ENCODE measurements at regions of chr5 and their contacts with region 1.

Region 1: GRCh38 chr5:149828161-149828884 is 98.2 kb downstream of the PPARGC1B start:
- DNase-seq: peak; percentile 87
- ATAC-seq: peak; percentile 80
- H3K4me3 Mint-ChIP-seq: no peak overlapping the region
- H3K27ac Mint-ChIP-seq: no peak overlapping the region
- H3K4me1 Mint-ChIP-seq: peaks cover 8% of the 10 kb centered on the region
- H3K27me3 Mint-ChIP-seq: no peaks in the 10 kb centered on the region

Region 2: GRCh38 chr5:149636851-149637246 is 191.5 kb before region 1 on chr5:
- CTCF ChIA-PET with region 1: interaction called, 115 read pairs
- DNase-seq: peak; percentile 73
- ATAC-seq: peak; percentile 66
- H3K4me3 Mint-ChIP-seq: no peak overlapping the region
- H3K27ac Mint-ChIP-seq: no peak overlapping the region
- H3K4me1 Mint-ChIP-seq: peaks cover 13% of the 10 kb centered on the region
- H3K27me3 Mint-ChIP-seq: no peaks in the 10 kb centered on the region

Region 3: DNA sequence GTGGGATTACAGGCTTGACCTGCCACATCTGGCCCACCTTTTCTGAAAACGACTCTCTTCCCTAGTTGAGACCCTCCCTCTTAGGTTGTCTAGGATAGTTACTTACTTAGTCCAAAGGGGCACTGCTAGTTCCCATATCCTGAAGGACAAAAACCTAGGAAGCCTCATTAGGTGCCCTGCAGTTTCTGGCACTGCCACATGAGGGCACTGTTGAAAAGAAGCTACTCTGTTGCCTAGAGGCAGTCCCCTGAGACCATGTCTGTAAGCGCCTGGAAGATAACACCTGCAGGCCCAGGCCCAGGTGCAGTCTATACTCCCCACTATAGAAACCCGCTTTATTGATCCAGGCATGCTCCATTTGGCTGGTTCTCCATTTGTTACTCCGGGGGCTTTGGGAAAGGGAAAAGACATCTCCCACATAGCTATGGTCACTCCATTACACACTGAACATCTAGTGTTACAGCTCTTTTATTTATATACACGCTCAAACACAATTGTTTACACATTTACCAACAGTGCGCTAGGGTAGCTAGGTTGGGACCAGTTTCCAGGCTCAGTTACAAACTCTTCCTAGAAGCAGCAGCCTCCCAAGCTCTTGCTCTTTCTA is 171.6 kb before region 1 on chr5:
- CTCF ChIA-PET with region 1: interaction called, 113 read pairs
- DNase-seq: peak; percentile 50
- ATAC-seq: no peak
- H3K4me3 Mint-ChIP-seq: no peak overlapping the region
- H3K27ac Mint-ChIP-seq: peak overlapping the region; percentile 26
- H3K4me1 Mint-ChIP-seq: no peaks in the 10 kb centered on the region
- H3K27me3 Mint-ChIP-seq: peaks cover 11% of the 10 kb centered on the region

Region 4: DNA sequence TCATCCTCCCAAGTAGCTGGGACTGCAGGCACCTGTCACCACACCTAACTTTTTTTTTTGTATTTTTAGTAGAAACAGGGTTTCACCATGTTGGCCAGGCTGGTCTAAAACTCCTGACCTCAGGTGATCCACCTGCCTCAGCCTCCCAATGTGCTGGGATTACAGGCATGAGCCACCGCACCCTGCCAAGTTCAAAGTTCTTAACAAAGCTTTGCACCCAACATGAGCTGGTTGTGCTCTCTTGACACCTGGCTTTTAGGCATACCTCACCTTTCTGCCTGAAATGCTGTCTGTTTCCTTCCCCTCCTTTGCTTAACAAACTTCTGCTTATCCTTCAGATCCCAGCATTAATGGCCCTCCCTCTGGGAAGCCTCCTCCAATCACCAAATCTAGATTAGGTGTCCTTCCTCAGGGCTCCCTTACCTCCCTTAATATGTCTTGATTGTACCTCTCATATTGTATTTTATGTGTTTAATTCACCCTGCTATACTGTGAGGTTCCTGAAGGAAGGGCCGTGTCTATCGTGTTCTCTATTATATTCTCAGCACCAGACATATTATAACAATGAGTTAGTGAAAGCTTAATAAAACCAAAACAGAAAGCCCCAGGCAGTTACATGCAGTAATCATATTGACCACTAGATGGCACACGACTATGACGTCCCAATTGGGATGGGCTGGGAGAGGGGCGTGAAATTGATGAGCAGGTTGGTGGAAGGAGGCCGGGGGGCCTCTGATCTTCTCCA is 161.1 kb before region 1 on chr5:
- CTCF ChIA-PET with region 1: interaction called, 113 read pairs
- DNase-seq: peak; percentile 41
- ATAC-seq: peak; percentile 36
- H3K4me3 Mint-ChIP-seq: no peak overlapping the region
- H3K27ac Mint-ChIP-seq: no peak overlapping the region
- H3K4me1 Mint-ChIP-seq: peaks cover 2% of the 10 kb centered on the region
- H3K27me3 Mint-ChIP-seq: peaks cover 7% of the 10 kb centered on the region

Region 5: GRCh38 chr5:149759986-149760853 is 68.1 kb before region 1 on chr5:
- CTCF ChIA-PET with region 1: no interaction called
- DNase-seq: no peak
- ATAC-seq: no peak
- H3K4me3 Mint-ChIP-seq: no peak overlapping the region
- H3K27ac Mint-ChIP-seq: no peak overlapping the region
- H3K4me1 Mint-ChIP-seq: peaks cover 5% of the 10 kb centered on the region
- H3K27me3 Mint-ChIP-seq: no peaks in the 10 kb centered on the region

Region 6: GRCh38 chr5:149960272-149961185 is 132.2 kb after region 1 on chr5 and contains the start of gene SLC26A2:
- CTCF ChIA-PET with region 1: interaction called, 98 read pairs
- DNase-seq: peak; percentile 98
- ATAC-seq: peak; percentile 99
- H3K4me3 Mint-ChIP-seq: peak within 1 kb of the TSS; percentile 85
- H3K27ac Mint-ChIP-seq: peak within 1 kb of the TSS; percentile 94
- H3K4me1 Mint-ChIP-seq: peaks cover 31% of the 10 kb centered on the region
- H3K27me3 Mint-ChIP-seq: no peaks in the 10 kb centered on the region
- total RNA-seq, gene SLC26A2: 6.2 to 8.4 TPM

Region 7: DNA sequence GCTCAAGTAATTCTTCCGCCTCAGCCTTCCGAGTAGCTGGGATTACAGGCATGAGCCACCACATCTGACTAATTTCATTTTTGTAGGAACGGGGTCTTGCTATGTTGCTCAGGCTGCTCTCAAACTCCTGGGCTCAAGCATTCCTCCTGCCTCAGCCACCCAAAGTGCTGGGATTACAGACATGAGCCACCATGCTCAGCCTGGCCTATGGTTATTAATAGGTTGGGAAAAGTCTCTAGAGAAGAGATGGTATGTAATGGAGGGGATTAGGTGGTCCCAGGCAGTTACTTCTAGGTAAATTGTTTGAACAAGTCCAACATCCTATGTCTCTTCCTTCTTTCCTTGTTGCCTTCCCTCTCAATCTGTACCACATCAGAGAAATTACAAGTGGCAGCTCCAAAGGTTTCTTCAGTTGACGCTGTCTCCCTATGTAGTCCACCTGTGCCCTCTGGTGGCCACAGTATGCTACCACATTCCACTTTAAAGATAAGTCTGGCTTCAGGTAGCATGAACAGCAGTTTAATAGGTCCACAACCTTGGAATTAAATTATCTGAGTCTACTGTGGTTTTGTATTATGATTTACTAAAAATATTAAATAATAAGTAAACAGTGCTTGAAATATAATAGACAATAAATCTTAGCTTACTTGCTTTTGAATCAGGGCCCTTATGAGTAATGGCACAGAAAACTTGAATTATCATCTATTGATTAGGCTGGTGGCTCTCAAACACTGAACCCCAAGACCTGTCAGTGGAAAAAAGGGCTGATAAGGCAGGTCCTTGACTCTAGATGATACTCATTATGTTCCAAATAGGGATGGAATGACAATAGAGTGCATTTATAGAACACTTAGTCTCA is 162.4 kb after region 1 on chr5:
- CTCF ChIA-PET with region 1: interaction called, 123 read pairs
- DNase-seq: peak; percentile 80
- ATAC-seq: peak; percentile 86
- H3K4me3 Mint-ChIP-seq: no peak overlapping the region
- H3K27ac Mint-ChIP-seq: no peak overlapping the region
- H3K4me1 Mint-ChIP-seq: peaks cover 3% of the 10 kb centered on the region
- H3K27me3 Mint-ChIP-seq: no peaks in the 10 kb centered on the region

Region 8: DNA sequence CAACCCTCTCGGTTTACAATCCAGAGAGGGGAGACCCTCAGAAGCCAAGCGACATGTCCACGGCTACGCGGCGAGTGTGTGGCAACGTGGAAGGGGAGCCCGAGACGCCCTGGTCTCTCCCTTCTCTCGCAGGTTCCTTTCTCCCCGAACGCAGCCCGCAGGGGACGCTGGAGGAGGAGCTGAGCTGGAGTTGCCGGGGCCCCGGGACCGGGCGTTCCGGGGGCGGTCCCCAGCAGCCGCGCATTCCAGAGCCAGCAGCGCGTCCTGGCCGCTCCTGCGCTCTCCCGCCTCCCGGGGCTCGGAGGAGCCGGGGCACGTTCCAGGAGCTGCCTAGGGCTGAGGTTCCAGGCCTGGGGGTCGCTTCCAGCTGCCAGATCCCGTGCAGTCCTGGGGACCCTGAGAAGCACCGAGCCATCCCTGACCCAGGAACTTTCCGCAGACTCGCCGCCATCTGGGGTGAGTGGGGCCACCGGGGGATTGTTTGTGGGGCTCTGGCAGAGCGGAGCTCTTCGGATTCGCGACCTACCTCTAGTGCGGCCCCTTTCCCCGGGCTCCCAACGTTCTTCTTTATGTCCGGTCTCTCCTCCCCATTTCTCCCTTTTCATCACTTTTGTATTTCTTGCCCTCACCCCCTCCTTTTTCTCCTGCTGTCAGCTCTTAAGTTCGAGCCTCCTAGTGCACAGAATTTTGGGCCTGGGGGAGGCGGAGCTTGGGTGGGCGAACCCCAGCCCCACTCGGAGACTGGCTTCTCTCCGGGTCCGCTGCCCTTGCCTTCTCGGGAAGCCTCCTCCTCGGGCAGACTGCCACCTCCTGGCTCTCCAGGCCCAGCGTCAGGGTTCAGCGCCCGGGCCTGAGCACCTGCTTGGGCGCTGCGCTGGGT is 950.4 kb after region 1 on chr5 and contains the start of gene SMIM3:
- CTCF ChIA-PET with region 1: no interaction called
- DNase-seq: peak; percentile 83
- ATAC-seq: peak; percentile 66
- H3K4me3 Mint-ChIP-seq: peak within 1 kb of the TSS; percentile 99
- H3K27ac Mint-ChIP-seq: peak within 1 kb of the TSS; percentile 94
- H3K4me1 Mint-ChIP-seq: peaks cover 65% of the 10 kb centered on the region
- H3K27me3 Mint-ChIP-seq: no peaks in the 10 kb centered on the region
- total RNA-seq, gene SMIM3: 22.1 to 37.5 TPM

Measured in activated CD8-positive, alpha-beta memory T cell treated with anti-CD3 and anti-CD28 coated beads, Interleukin-2, amount 10 ng/mL, durations not matched to agents 7 days and 5 days (primary cell).